Activated naive CD4-positive, alpha-beta T cell treated with anti-CD3 and anti-CD28 coated beads for 36 hours (primary cell): ENCODE measurements at regions of chr11 and their contacts with region 1.

Region 1: DNA sequence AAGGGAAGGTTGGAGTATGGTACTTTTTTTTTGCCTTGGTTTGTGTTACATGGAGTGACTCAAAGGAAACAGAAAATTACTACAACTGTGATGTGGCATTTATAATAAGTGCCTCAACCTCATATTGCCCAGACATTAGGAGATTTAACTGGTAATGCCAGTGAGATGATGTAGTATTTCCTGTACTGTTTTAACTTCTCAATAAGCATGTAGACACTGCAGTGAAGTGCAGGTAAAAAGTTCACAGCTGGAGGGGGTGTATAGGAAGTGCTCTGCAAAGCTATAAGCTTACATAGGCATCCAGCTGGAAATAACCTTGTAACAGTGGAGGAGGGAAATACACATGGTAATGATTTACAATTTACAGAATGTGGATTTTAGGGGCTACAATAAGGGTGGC is 138.2 kb upstream of the MTMR2 start:
- DNase-seq: peak; percentile 76
- H3K4me3 Mint-ChIP-seq: peak overlapping the region; percentile 13
- H3K27ac Mint-ChIP-seq: peak overlapping the region; percentile 94
- H3K4me1 Mint-ChIP-seq: peaks cover 78% of the 10 kb centered on the region
- H3K27me3 Mint-ChIP-seq: no peaks in the 10 kb centered on the region

Region 2: DNA sequence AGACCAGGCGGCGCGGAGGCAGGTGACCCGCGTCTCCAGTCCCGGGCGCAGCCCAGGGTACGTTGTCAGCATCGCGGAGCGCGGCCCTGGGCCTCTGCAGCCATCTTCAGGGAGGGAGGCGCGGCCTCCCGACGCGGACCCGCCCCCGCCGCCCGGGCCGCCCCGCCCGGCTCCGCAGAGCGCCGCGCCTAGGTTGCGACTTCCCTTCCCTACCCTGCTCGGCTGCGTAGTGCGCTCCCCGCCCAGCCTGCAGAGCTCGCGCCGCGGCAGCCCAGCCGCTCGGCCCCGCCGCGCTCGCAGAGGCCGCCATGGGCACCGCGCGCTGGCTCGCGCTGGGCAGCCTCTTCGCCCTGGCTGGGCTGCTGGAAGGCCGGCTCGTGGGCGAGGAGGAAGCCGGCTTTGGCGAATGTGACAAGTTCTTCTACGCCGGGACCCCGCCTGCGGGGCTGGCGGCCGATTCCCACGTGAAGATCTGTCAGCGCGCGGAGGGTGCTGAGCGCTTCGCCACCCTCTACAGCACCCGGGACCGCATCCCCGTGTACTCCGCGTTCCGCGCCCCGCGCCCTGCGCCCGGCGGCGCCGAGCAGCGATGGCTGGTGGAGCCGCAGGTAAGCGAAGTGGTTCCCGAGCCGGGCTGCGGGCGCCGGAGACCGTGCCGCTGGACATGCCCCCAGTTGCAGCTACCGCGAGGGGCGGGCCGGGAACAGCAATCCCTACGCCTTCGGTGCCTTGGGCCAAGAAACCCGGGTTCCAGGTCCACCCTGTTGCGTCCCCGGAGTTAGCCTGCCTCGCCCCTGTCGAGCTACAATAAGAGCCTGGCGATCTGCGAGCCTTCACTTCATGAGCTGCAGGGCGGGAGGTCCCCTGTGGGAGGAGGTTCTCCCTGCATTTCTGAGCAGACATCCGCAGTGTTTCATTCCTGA is 972.3 kb before region 1 on chr11 and contains the start of gene ENDOD1:
- CTCF ChIA-PET with region 1: no interaction called
- intact Hi-C with region 1: loop called (anchors 10 kb)
- DNase-seq: peak; percentile 82
- H3K4me3 Mint-ChIP-seq: peak within 1 kb of the TSS; percentile 86
- H3K27ac Mint-ChIP-seq: peak within 1 kb of the TSS; percentile 87
- H3K4me1 Mint-ChIP-seq: peaks cover 64% of the 10 kb centered on the region
- H3K27me3 Mint-ChIP-seq: no peaks in the 10 kb centered on the region
- total RNA-seq, gene ENDOD1: 14.5 to 15.2 TPM

Region 3: DNA sequence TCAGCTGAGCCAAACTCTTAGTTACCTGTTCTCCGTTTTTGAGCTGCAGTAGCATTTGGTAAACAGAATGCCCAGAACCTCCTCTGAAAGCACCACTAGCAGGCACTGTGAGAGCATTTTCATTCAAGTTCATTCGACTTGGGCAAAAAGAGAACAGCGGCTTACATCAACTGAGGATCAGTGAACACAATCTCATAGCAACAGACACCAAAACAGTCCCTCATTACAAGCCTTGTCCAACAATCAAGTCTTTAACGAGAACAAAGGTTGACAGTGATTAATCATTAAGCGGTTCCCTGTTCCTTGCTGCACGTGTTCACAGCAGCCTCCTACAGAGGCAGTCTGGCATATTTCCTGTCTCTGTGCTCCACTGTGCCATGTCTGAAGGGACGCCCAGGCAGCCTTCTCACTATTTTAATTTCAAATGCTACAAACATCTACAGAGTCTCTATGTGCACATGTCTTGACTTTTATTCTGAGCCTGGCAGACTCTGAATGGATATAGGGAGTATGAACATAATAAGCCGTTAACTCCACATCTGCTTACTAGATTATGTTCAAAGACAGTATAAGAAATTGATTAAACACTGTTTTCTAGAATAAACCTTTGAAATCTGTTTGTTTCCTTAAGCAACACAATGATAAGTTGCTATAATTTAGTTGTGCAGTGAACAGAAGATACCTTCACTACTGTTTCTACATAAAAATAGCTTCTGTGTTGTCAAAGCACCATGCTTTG is 49.9 kb before region 1 on chr11:
- CTCF ChIA-PET with region 1: no interaction called
- intact Hi-C with region 1: loop called (anchors 1 kb)
- DNase-seq: peak; percentile 67
- H3K4me3 Mint-ChIP-seq: peak overlapping the region; percentile 52
- H3K27ac Mint-ChIP-seq: peak overlapping the region; percentile 72
- H3K4me1 Mint-ChIP-seq: peaks cover 69% of the 10 kb centered on the region
- H3K27me3 Mint-ChIP-seq: no peaks in the 10 kb centered on the region

Region 4: DNA sequence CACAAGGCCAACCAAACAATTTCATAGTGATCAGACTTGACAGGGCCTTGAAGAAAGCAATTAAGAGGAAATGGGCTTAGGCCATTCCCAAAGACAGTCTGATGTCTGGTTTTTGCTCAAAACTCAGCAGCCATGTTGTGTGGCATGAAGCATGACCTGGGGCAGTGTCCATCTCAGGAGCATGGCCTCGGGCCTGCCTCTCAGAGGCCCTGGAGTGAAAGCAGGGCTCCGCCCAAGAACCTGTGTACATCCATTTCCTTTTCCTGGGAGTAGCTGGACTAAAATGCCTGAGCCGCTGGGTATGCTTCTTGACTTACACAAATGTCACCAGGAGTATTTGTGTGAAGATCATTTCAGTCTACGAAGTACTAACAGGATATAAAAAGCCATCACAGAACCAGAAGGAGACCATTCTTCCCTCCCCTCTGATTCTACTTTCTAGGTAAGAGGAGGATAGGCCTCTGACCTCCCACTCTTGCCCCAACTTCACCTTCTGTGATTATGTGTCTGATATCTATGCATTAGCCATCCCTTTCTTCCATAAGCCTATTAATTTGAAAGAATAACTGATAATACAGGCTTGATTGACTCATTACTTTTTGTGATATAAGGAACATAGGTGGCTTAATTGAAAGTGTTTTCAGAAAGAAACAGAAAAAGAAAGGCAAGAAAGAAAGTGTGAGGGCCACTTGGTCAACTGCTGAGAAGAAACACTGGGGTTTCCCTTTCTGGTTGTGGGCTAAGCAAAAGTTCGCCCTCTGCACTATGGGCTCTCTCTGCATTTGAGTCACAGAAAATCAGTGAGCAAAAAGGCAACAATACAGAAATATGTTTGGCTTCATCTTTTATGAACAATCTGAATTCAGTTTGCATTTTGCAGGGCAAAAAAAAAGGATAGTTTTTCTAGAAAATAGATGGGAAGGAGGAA is 50.3 kb after region 1 on chr11:
- CTCF ChIA-PET with region 1: no interaction called
- intact Hi-C with region 1: loop called (anchors 2 kb)
- DNase-seq: peak; percentile 44
- H3K4me3 Mint-ChIP-seq: no peak overlapping the region
- H3K27ac Mint-ChIP-seq: peak overlapping the region; percentile 28
- H3K4me1 Mint-ChIP-seq: peaks cover 57% of the 10 kb centered on the region
- H3K27me3 Mint-ChIP-seq: no peaks in the 10 kb centered on the region

Region 5: DNA sequence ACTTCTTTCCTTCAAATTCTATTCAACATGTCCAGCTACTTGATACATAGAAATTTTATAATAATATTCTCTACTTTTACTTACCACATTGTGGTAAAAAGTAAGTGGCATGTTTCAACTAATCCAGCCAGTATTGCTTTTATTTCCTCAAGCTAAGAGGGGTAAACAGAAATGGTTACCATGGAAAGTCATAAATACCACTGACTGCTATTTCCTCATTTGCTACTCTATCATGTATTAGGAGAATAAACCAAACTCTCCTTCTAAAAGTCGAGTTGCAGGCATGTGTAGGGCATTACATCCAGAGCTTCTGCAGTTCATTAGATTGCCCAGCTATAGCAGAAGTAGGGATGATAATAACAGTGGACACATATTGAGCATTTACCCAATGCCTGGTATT is 72.5 kb after region 1 on chr11:
- CTCF ChIA-PET with region 1: no interaction called
- intact Hi-C with region 1: no loop called
- DNase-seq: no peak
- H3K4me3 Mint-ChIP-seq: no peak overlapping the region
- H3K27ac Mint-ChIP-seq: no peak overlapping the region
- H3K4me1 Mint-ChIP-seq: peaks cover 64% of the 10 kb centered on the region
- H3K27me3 Mint-ChIP-seq: no peaks in the 10 kb centered on the region

Region 6: DNA sequence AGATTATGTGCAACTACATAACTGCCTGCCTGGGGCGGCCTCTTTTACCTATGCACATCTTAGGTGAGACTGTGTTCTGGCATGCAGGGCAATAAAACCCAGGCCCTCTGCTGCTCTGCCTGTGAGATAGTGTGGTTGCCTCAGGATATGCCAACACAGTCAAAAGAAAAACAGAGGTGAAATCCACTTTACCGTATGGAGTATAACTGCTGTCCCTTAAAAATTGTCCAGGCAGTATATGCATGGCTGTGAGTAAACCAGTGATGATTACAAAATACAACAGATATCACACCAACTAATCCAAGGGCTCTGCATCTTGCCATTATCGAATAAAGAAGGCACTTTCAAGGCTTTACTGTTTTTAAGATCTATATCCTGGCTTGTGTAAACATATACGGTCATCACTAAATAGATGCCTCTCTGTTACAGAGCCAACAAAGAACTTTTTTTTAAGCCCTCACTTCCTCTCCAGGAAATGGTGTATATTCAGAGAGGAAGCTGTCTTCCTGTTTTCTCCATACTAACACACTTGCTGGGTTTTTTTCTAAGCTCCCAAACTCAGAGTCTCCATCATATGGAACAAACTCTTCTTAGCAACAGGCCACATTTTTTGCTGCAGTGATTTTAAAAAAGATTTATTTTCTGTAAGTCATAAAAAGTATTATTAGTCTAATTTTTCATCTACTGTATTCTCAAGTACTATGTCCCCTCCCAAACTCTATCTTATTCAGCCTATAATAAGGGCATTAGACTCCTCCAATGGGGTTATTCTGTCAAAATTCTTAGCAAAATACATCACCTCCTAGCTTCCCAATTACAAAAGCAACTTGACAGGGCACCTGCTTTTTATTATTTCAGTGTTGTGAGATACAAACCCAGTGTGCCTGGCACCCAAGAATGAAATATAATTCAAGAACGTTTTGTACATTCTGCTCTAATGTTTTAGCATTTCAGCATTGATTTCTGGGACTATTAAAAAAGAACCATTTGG is 145.6 kb after region 1 on chr11:
- CTCF ChIA-PET with region 1: interaction called, 3 read pairs
- intact Hi-C with region 1: loop called (anchors 1 kb)
- DNase-seq: peak; percentile 49
- H3K4me3 Mint-ChIP-seq: peak overlapping the region; percentile 40
- H3K27ac Mint-ChIP-seq: peak overlapping the region; percentile 98
- H3K4me1 Mint-ChIP-seq: peaks cover 88% of the 10 kb centered on the region
- H3K27me3 Mint-ChIP-seq: no peaks in the 10 kb centered on the region

Region 7: GRCh38 chr11:96389720-96390487 is 327.8 kb after region 1 on chr11 and contains the starts of genes CCDC82 and JRKL:
- CTCF ChIA-PET with region 1: interaction called, 3 read pairs
- intact Hi-C with region 1: loop called (anchors 2 kb)
- DNase-seq: peak; percentile 99
- H3K4me3 Mint-ChIP-seq: peak within 1 kb of the TSS; percentile 89
- H3K27ac Mint-ChIP-seq: peak within 1 kb of the TSS; percentile 91
- H3K4me1 Mint-ChIP-seq: peaks cover 58% of the 10 kb centered on the region
- H3K27me3 Mint-ChIP-seq: no peaks in the 10 kb centered on the region
- total RNA-seq, gene CCDC82: 32.0 to 34.0 TPM
- total RNA-seq, gene JRKL: 12.3 to 12.7 TPM